ENCODE measurements at regions of chr11 and their contacts with region 1.

Region 1: GRCh38 chr11:105432241-105432995 is 177.5 kb upstream of the GRIA4 start:
- DNase-seq: no peak
- H3K4me3 ChIP-seq: no peak overlapping the region
- H3K27ac ChIP-seq: no peak overlapping the region
- H3K4me1 ChIP-seq: no peaks in the 10 kb centered on the region
- H3K27me3 ChIP-seq: no peaks in the 10 kb centered on the region
- CTCF ChIP-seq: no peak

Region 2: GRCh38 chr11:105507496-105508254 is 75.3 kb after region 1 on chr11:
- intact Hi-C with region 1: no loop called
- DNase-seq: no peak
- H3K4me3 ChIP-seq: no peak overlapping the region
- H3K27ac ChIP-seq: no peak overlapping the region
- H3K4me1 ChIP-seq: no peaks in the 10 kb centered on the region
- H3K27me3 ChIP-seq: no peaks in the 10 kb centered on the region
- CTCF ChIP-seq: no peak

Region 3: GRCh38 chr11:105910095-105910715 is 477.8 kb after region 1 on chr11:
- intact Hi-C with region 1: loop called (anchors 5 kb)
- DNase-seq: no peak
- H3K4me3 ChIP-seq: no peak overlapping the region
- H3K27ac ChIP-seq: no peak overlapping the region
- H3K4me1 ChIP-seq: no peaks in the 10 kb centered on the region
- H3K27me3 ChIP-seq: no peaks in the 10 kb centered on the region
- CTCF ChIP-seq: no peak